Spleen (tissue), 13 donors: ENCODE measurements at regions of chr7 and their contacts with region 1.

Region 1: GRCh38 chr7:102390697-102391484 is 5.3 kb upstream of the PRKRIP1 start:
- DNase-seq: peak; percentile 90
- H3K4me3 ChIP-seq: no peak overlapping the region
- H3K27ac ChIP-seq: no peak overlapping the region
- H3K4me1 ChIP-seq: peaks cover 0 to 17% (median 10%) of the 10 kb centered on the region in 6 donors
- H3K27me3 ChIP-seq: no peaks in the 10 kb centered on the region
- CTCF ChIP-seq: peak; percentile 76 to 92 (median 88)
- POLR2A ChIP-seq: no peak

Region 2: GRCh38 chr7:101542527-101543241 is 848.2 kb before region 1 on chr7:
- intact Hi-C with region 1: loop called (anchors 5 kb)
- DNase-seq: peak; percentile 85
- H3K4me3 ChIP-seq: no peak overlapping the region
- H3K27ac ChIP-seq: no peak overlapping the region
- H3K4me1 ChIP-seq: peaks cover 0 to 12% (median 6%) of the 10 kb centered on the region in 6 donors
- H3K27me3 ChIP-seq: peaks cover 0 to 7% (median 0%) of the 10 kb centered on the region in 7 donors
- CTCF ChIP-seq: peak; percentile 76 to 90 (median 89)
- POLR2A ChIP-seq: no peak

Region 3: GRCh38 chr7:102279537-102280400 is 111.1 kb before region 1 on chr7:
- intact Hi-C with region 1: loop called (anchors 5 kb)
- DNase-seq: peak; percentile 90
- H3K4me3 ChIP-seq: peak overlapping the region in 1 of 8 donors; percentile 41
- H3K27ac ChIP-seq: peak overlapping the region in 4 of 8 donors; percentile 4 to 46 (median 40)
- H3K4me1 ChIP-seq: peaks cover 13 to 36% (median 26%) of the 10 kb centered on the region in 6 donors
- H3K27me3 ChIP-seq: no peaks in the 10 kb centered on the region
- CTCF ChIP-seq: peak; percentile 68 to 92 (median 85)
- POLR2A ChIP-seq: no peak